ENCODE measurements at regions of chr9 and their contacts with region 1.

Region 1: GRCh38 chr9:136488247-136489214 is 5.7 kb upstream of the SEC16A start:
- DNase-seq: peak; percentile 69 to 79
- ATAC-seq: peak in 5 of 8 donors; percentile 15 to 41 (median 35)
- H3K4me3 ChIP-seq: no peak overlapping the region
- H3K27ac ChIP-seq: no peak overlapping the region
- H3K4me1 ChIP-seq: peaks cover 8 to 44% (median 23%) of the 10 kb centered on the region in 9 donors
- H3K27me3 ChIP-seq: no peaks in the 10 kb centered on the region
- CTCF ChIP-seq: peak; percentile 97 to 100 (median 98)

Region 2: DNA sequence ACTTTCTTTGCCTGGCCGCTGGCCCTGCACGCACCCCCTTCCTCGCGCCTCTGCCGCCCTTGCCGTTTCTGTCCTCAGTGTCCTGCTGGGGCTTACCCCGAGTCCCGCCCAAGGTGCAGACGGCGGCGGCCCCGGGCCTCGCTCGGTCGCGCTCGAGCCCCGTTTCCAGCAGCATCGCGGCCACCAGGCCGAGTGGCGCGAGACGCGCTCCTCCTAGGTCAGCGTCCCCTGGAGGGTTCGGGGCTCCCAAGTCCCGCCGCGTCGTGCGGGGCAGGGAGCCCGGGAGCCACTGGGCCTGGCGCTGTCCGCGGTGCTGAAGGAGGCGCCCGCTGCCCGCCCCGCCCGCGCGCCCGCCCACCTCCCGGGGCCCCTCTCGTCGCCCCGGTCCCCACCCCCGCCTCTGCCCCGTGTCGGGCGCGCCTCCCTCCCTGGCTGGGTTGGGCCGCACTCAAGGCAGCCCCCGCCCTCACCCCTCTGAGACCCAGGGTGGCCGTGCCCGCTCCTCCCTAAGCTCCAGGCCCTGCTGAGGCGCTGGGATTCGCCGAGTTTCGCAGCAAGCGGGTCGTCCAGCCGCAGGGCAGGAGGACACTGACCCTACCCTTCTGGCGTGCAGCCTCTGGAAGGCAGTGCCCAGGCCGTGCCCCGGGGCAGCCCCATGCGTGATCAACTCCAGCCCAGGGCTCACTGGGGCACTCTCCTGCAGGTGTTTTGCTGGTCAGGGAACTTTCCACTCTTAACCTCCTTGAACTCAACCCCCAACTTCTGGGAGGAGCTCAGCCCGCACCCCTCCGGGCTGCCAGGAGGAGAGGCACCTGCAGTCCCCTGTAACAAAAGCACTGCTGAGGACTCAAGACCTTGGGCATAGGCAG is 283.5 kb before region 1 on chr9 and contains the start of gene LHX3:
- intact Hi-C with region 1: no loop called
- DNase-seq: no peak
- ATAC-seq: peak in 7 of 8 donors; percentile 34 to 65 (median 43)
- H3K4me3 ChIP-seq: no peak within 1 kb of the TSS
- H3K27ac ChIP-seq: no peak within 1 kb of the TSS
- H3K4me1 ChIP-seq: peaks cover 0 to 4% (median 0%) of the 10 kb centered on the region in 9 donors
- H3K27me3 ChIP-seq: peaks cover 47 to 57% (median 51%) of the 10 kb centered on the region in 7 donors
- CTCF ChIP-seq: no peak
- total RNA-seq, gene LHX3: not detected

Region 3: DNA sequence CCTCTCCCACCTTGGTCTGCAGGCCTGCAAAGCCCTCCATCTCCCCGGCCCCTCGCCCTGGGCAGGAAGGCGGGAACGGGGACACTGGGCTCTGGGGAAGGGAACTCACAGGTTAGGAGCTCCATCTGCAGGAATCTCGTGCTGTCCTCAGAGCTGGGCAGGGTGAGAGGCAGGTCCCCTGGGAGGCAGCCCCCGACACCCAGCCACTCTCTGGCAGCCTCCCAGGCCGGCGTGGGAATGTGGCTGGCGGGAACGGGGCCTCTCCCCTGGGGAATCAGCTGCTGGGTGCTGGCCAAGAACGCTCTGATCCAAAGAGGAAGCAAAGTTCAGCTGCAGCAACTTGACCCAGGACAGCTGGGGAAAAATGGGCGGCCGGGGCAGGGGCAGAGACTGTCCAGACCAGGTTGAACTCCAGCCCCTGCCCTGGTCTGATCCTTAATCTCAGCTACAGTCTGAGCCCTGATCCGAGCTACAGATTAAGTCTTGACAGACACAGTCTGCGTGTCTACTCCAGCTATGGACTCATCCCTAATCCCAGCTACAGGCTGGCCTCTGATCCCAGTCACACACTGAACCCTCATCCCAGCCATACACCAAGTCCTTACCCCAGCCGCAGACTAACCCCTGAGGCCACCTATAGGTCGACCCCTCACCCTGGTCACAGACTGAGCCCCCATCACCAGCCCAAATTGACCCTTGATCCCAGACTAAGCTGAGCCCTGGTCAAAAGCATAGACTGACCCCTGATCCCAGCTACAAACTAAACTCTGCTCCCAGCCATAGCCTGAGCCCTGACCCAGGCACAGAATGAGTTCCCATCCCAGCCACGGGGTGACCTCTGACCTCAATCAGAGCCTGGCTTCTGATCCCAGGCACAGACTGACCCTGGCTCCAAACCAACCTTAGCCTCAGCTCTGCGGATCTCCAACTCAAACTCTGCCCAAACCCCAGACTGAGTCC is 136.8 kb after region 1 on chr9:
- intact Hi-C with region 1: loop called in 7 of 10 experiments (anchors 1 to 2 kb)
- DNase-seq: peak; percentile 92 to 93
- ATAC-seq: peak; percentile 76 to 91 (median 86)
- H3K4me3 ChIP-seq: no peak overlapping the region
- H3K27ac ChIP-seq: peak overlapping the region in 9 of 10 donors; percentile 20 to 76 (median 66)
- H3K4me1 ChIP-seq: peaks cover 15 to 52% (median 46%) of the 10 kb centered on the region in 9 donors
- H3K27me3 ChIP-seq: peaks cover 0 to 18% (median 0%) of the 10 kb centered on the region in 7 donors
- CTCF ChIP-seq: peak in 8 of 9 donors; percentile 26 to 83 (median 66)

Measured in heart right ventricle (tissue), 16 donors.